T-cell (primary cell): ENCODE measurements at regions of chr2 and their contacts with region 1.

Region 1: GRCh38 chr2:234288974-234289455 is 207.9 kb downstream of the ARL4C start:
- DNase-seq: peak; percentile 53 to 88 (median 70)
- ATAC-seq: peak in 1 of 4 experiments; percentile 1
- H3K4me3 ChIP-seq: no peak overlapping the region
- H3K4me3 Mint-ChIP-seq: peak overlapping the region in 1 of 3 donors; percentile 75
- H3K27ac ChIP-seq: peak overlapping the region; percentile 100
- H3K27ac Mint-ChIP-seq: peak overlapping the region; percentile 91 to 99
- H3K4me1 ChIP-seq: peaks cover 42 to 65% of the 10 kb centered on the region in 2 experiments
- H3K4me1 Mint-ChIP-seq: peaks cover 68 to 80% (median 74%) of the 10 kb centered on the region in 3 donors
- H3K27me3 ChIP-seq: no peaks in the 10 kb centered on the region
- H3K27me3 Mint-ChIP-seq: no peaks in the 10 kb centered on the region

Region 2: DNA sequence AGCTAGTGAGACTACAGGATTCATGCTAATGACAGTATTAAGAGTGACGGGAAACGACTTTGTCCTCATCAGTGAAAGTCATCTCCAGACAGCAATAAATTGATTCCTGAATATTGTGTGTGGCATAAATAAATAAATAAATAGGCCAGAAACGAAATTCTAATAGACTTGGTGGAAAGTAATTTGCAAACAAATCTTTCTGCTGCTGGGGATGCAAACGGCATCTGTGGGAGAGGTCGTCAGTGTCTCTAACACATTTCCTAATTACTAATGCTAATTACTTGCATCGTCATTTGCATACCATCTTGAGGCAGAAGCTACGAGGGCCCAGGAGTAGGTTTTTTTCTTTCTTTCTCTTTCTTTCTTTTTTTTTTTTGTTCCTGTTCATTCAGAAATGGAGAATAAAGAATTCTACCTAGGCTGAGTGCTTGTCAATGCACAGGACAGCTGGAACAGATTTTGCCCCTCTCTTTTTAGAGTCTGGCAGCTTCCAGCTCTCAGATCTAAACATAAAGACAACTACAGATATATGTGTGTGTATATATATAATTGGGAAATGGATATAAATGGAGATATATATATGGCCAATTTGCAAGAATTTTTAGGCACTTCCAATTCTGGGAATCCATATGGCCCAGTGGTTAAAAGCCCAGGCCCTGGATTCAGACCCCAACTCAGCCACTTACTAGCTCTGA is 163.4 kb before region 1 on chr2:
- CTCF ChIA-PET with region 1: no interaction called
- POLR2A ChIA-PET with region 1: no interaction called
- DNase-seq: no peak
- ATAC-seq: no peak
- H3K4me3 ChIP-seq: no peak overlapping the region
- H3K4me3 Mint-ChIP-seq: no peak overlapping the region
- H3K27ac ChIP-seq: no peak overlapping the region
- H3K27ac Mint-ChIP-seq: no peak overlapping the region
- H3K4me1 ChIP-seq: peaks cover 0 to 4% of the 10 kb centered on the region in 2 experiments
- H3K4me1 Mint-ChIP-seq: peaks cover 4 to 13% (median 6%) of the 10 kb centered on the region in 3 donors
- H3K27me3 ChIP-seq: peaks cover 0 to 2% of the 10 kb centered on the region in 2 experiments
- H3K27me3 Mint-ChIP-seq: peaks cover 0 to 2% of the 10 kb centered on the region in 2 donors

Region 3: GRCh38 chr2:234308813-234309195 is 19.8 kb after region 1 on chr2:
- CTCF ChIA-PET with region 1: interaction called, 5 to 9 read pairs
- POLR2A ChIA-PET with region 1: interaction called in 1 of 2 experiments, 17 read pairs
- DNase-seq: peak in 34 of 35 experiments; percentile 39 to 86 (median 64)
- ATAC-seq: peak; percentile 94 to 98 (median 96)
- H3K4me3 ChIP-seq: no peak overlapping the region
- H3K4me3 Mint-ChIP-seq: peak overlapping the region; percentile 49 to 61 (median 50)
- H3K27ac ChIP-seq: peak overlapping the region; percentile 78
- H3K27ac Mint-ChIP-seq: peak overlapping the region; percentile 90 to 97
- H3K4me1 ChIP-seq: peaks cover 8 to 27% of the 10 kb centered on the region in 2 experiments
- H3K4me1 Mint-ChIP-seq: peaks cover 25 to 60% (median 46%) of the 10 kb centered on the region in 3 donors
- H3K27me3 ChIP-seq: no peaks in the 10 kb centered on the region
- H3K27me3 Mint-ChIP-seq: no peaks in the 10 kb centered on the region